Colonic mucosa (tissue), 4 donors: ENCODE measurements at regions of chr4 and their contacts with region 1.

Region 1: DNA sequence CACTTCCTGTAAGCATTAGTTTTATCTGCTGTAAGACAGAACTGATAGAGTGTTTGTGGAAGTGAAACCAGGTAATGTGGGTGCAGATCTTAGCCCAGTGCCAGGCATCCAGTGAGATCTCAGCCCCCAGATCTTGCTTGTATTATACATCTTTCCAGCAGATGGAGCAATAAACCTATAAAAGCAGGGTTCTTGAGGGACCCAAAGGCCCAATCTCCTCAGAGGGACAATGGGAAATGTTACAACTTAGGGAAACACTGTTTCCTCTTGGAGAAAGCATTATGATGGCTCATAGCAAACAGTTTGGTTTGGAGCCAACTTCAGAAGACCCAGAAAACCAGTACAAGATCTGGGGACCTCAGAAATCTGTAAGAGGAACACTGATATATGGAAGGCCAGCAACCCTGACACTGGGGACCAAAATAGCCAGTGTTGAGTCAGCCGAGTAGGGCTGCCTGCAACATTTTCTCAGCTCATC is 206.3 kb downstream of the SLC7A11 start:
- DNase-seq: no peak
- H3K4me3 ChIP-seq: no peak overlapping the region
- H3K27ac ChIP-seq: no peak overlapping the region
- H3K4me1 ChIP-seq: no peaks in the 10 kb centered on the region
- H3K27me3 ChIP-seq: no peaks in the 10 kb centered on the region
- CTCF ChIP-seq: peak; percentile 55

Region 2: GRCh38 chr4:138174981-138175794 is 139.4 kb after region 1 on chr4:
- intact Hi-C with region 1: loop called (anchors 5 kb)
- DNase-seq: peak; percentile 43
- H3K4me3 ChIP-seq: no peak overlapping the region
- H3K27ac ChIP-seq: no peak overlapping the region
- H3K4me1 ChIP-seq: no peaks in the 10 kb centered on the region
- H3K27me3 ChIP-seq: no peaks in the 10 kb centered on the region
- CTCF ChIP-seq: peak; percentile 15

Region 3: DNA sequence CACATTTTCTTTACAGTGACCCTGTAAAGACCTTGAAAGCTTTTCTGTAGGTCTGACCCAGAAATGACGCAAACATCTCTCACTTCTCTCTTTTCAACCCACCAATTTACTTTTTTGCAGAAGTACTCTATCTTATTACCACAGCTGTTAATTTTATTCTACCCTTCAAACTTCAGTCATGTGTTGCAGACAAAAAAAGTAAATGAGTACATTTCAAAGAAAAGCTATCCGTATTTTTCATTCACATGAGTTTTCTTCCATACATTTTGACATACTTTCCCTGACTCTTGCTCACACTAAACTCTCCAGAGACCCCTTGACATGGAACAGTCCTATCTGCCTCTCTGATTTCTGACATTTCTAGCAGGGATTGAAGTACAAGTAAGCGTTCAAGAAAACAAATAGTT is 154.6 kb after region 1 on chr4:
- intact Hi-C with region 1: no loop called
- DNase-seq: no peak
- H3K4me3 ChIP-seq: no peak overlapping the region
- H3K27ac ChIP-seq: no peak overlapping the region
- H3K4me1 ChIP-seq: no peaks in the 10 kb centered on the region
- H3K27me3 ChIP-seq: no peaks in the 10 kb centered on the region
- CTCF ChIP-seq: no peak

Region 4: GRCh38 chr4:138870737-138871554 is 835.1 kb after region 1 on chr4:
- intact Hi-C with region 1: loop called (anchors 5 kb)
- DNase-seq: peak; percentile 65
- H3K4me3 ChIP-seq: no peak overlapping the region
- H3K27ac ChIP-seq: no peak overlapping the region
- H3K4me1 ChIP-seq: no peaks in the 10 kb centered on the region
- H3K27me3 ChIP-seq: no peaks in the 10 kb centered on the region
- CTCF ChIP-seq: peak; percentile 84